ENCODE measurements at regions of chr12 and their contacts with region 1.

Region 1: DNA sequence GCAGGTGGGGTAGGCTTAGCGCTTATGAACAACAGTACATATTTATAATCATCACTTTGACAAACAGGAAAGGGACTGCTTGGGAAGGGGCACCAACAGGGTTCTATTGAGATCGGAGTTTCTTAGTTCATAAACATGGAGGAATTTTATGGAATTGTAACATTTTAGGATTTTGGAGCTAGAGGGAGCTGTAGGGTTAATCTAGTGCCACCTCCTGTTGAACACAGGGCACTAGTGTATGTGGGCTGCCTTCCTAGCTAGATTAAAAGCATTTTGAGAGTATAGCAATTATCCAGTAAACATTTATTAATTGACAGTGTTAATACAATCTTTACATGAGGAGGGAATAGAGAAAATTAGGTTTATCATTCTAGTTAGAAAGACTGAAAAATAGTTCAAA is 23.1 kb upstream of the TBC1D30 start:
- DNase-seq: no peak
- H3K4me3 ChIP-seq: no peak overlapping the region
- H3K27ac ChIP-seq: no peak overlapping the region
- H3K4me1 ChIP-seq: no peaks in the 10 kb centered on the region
- H3K27me3 ChIP-seq: no peaks in the 10 kb centered on the region
- CTCF ChIP-seq: peak in 2 of 3 experiments; percentile 44 to 89; a peak in 3 of 4 replicates
- EP300 ChIP-seq: no peak
- POLR2A ChIP-seq: no peak
- RAD21 ChIP-seq: peak; percentile 18 to 40; a peak in 3 of 4 replicates

Region 2: GRCh38 chr12:64737539-64737938 is 63.8 kb before region 1 on chr12:
- CTCF ChIA-PET with region 1: no interaction called
- POLR2A ChIA-PET with region 1: no interaction called
- DNase-seq: no peak
- H3K4me3 ChIP-seq: no peak overlapping the region
- H3K27ac ChIP-seq: no peak overlapping the region
- H3K4me1 ChIP-seq: no peaks in the 10 kb centered on the region
- H3K27me3 ChIP-seq: no peaks in the 10 kb centered on the region
- CTCF ChIP-seq: no peak
- EP300 ChIP-seq: no peak
- POLR2A ChIP-seq: no peak
- RAD21 ChIP-seq: no peak

Region 3: DNA sequence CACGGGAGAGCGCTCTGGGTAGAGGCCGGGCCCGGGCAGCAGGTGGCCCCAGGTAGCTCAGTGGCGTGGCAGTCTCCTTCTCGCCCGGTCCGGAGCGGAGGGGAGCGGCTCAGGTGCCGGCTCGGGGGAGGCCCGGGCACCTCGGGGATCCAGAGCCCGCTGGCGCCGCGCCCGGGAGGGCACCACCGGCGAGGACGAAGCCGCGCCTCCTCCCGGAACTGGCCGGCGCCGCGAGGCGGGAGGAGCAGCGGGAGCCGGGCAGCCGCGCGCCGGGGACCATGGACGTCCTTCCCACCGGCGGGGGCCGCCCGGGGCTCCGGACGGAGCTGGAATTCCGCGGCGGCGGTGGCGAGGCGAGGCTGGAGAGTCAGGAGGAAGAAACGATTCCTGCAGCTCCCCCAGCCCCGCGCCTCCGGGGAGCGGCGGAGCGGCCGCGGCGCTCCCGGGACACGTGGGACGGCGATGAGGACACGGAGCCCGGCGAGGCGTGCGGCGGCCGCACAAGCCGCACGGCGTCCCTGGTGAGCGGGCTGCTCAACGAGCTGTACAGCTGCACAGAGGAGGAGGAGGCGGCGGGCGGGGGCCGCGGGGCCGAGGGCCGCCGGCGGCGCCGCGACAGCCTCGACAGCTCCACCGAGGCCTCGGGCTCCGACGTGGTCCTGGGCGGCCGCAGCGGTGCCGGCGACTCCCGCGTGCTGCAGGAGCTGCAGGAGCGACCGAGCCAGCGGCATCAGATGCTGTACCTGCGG is 20.7 kb before region 1 on chr12:
- CTCF ChIA-PET with region 1: interaction called, 34 read pairs
- POLR2A ChIA-PET with region 1: interaction called, 3 read pairs
- DNase-seq: peak in 1 of 2 experiments; percentile 73
- H3K4me3 ChIP-seq: peak overlapping the region; percentile 32 to 68 (median 48)
- H3K27ac ChIP-seq: no peak overlapping the region
- H3K4me1 ChIP-seq: peaks cover 0 to 6% (median 2%) of the 10 kb centered on the region in 4 experiments; a peak in 2 of 7 replicates
- H3K27me3 ChIP-seq: peaks cover 2 to 34% (median 22%) of the 10 kb centered on the region in 4 experiments
- CTCF ChIP-seq: no peak
- EP300 ChIP-seq: no peak
- POLR2A ChIP-seq: peak in 1 of 2 experiments; percentile 42; a peak in 2 of 3 replicates
- RAD21 ChIP-seq: no peak

Region 4: GRCh38 chr12:64819816-64820402 is 18.5 kb after region 1 on chr12:
- CTCF ChIA-PET with region 1: interaction called, 29 read pairs
- POLR2A ChIA-PET with region 1: interaction called, 3 read pairs
- DNase-seq: no peak
- H3K4me3 ChIP-seq: no peak overlapping the region
- H3K27ac ChIP-seq: no peak overlapping the region
- H3K4me1 ChIP-seq: 0 out of 7 replicates have a peak, but pooled peaks cover 0 to 5% (median under 1%) of the 10 kb centered on the region in 4 experiments
- H3K27me3 ChIP-seq: peaks cover 8 to 17% (median 15%) of the 10 kb centered on the region in 4 experiments; a peak in 6 of 7 replicates
- CTCF ChIP-seq: no peak
- EP300 ChIP-seq: no peak
- POLR2A ChIP-seq: no peak
- RAD21 ChIP-seq: no peak

Region 5: GRCh38 chr12:64864319-64864718 is 62.9 kb after region 1 on chr12:
- CTCF ChIA-PET with region 1: interaction called, 11 read pairs
- POLR2A ChIA-PET with region 1: no interaction called
- DNase-seq: no peak
- H3K4me3 ChIP-seq: no peak overlapping the region
- H3K27ac ChIP-seq: no peak overlapping the region
- H3K4me1 ChIP-seq: peaks cover 0 to 4% (median under 1%) of the 10 kb centered on the region in 4 experiments; a peak in 2 of 7 replicates
- H3K27me3 ChIP-seq: no peaks in the 10 kb centered on the region
- CTCF ChIP-seq: no peak
- EP300 ChIP-seq: no peak
- POLR2A ChIP-seq: no peak
- RAD21 ChIP-seq: no peak

Region 6: GRCh38 chr12:64890873-64891468 is 89.6 kb after region 1 on chr12:
- CTCF ChIA-PET with region 1: interaction called, 24 read pairs
- POLR2A ChIA-PET with region 1: no interaction called
- DNase-seq: no peak
- H3K4me3 ChIP-seq: no peak overlapping the region
- H3K27ac ChIP-seq: no peak overlapping the region
- H3K4me1 ChIP-seq: peaks cover 0 to 5% (median 2%) of the 10 kb centered on the region in 4 experiments; a peak in 3 of 7 replicates
- H3K27me3 ChIP-seq: no peaks in the 10 kb centered on the region
- CTCF ChIP-seq: peak in 2 of 3 experiments; percentile 62 to 73; a peak in 3 of 4 replicates
- EP300 ChIP-seq: no peak
- POLR2A ChIP-seq: no peak
- RAD21 ChIP-seq: peak; percentile 94 to 97

Region 7: GRCh38 chr12:65232476-65233077 is 431.2 kb after region 1 on chr12:
- CTCF ChIA-PET with region 1: interaction called, 10 read pairs
- POLR2A ChIA-PET with region 1: no interaction called
- DNase-seq: no peak
- H3K4me3 ChIP-seq: no peak overlapping the region
- H3K27ac ChIP-seq: no peak overlapping the region
- H3K4me1 ChIP-seq: no peaks in the 10 kb centered on the region
- H3K27me3 ChIP-seq: no peaks in the 10 kb centered on the region
- CTCF ChIP-seq: no peak; a peak in 1 of 4 replicates
- EP300 ChIP-seq: no peak
- POLR2A ChIP-seq: no peak
- RAD21 ChIP-seq: peak in 1 of 2 experiments; percentile 18; a peak in 2 of 4 replicates

Region 8: GRCh38 chr12:65306366-65307168 is 505.2 kb after region 1 on chr12:
- CTCF ChIA-PET with region 1: no interaction called
- POLR2A ChIA-PET with region 1: no interaction called
- DNase-seq: no peak
- H3K4me3 ChIP-seq: no peak overlapping the region
- H3K27ac ChIP-seq: no peak overlapping the region
- H3K4me1 ChIP-seq: no peaks in the 10 kb centered on the region
- H3K27me3 ChIP-seq: no peaks in the 10 kb centered on the region
- CTCF ChIP-seq: peak in 2 of 3 experiments; percentile 66 to 68; a peak in 3 of 4 replicates
- EP300 ChIP-seq: no peak
- POLR2A ChIP-seq: no peak
- RAD21 ChIP-seq: peak; percentile 87 to 90

Measured in H1 (cell line).